A673 (cell line): ENCODE measurements at regions of chr15 and their contacts with region 1.

Region 1: GRCh38 chr15:91043202-91043874 is 20.9 kb upstream of the VPS33B start:
- DNase-seq: no peak
- H3K4me3 ChIP-seq: no peak overlapping the region
- H3K27ac ChIP-seq: no peak overlapping the region
- H3K4me1 ChIP-seq: no peaks in the 10 kb centered on the region
- H3K27me3 ChIP-seq: no peaks in the 10 kb centered on the region
- CTCF ChIP-seq: no peak

Region 2: DNA sequence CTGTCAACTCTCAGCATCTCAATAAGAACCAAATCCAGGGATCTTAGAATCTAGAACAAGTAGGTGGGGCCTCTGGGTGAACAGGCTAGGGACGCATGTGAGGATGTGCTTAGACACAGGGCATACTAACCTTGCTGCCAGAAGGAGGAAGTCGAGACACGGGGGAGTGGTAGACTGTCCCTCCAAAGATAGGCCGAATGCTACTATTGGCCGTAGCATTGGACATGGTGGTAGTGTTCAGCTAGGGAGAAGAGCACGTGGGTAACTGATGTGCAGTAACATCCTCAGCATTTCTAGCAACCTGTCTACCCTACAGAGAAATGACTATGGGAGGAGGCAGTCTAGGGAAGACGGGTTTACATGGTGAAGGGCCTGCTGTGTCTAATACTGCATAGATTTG is 73.1 kb before region 1 on chr15:
- CTCF ChIA-PET with region 1: no interaction called
- POLR2A ChIA-PET with region 1: no interaction called
- intact Hi-C with region 1: no loop called
- DNase-seq: no peak
- H3K4me3 ChIP-seq: no peak overlapping the region
- H3K27ac ChIP-seq: no peak overlapping the region
- H3K4me1 ChIP-seq: no peaks in the 10 kb centered on the region
- H3K27me3 ChIP-seq: no peaks in the 10 kb centered on the region
- CTCF ChIP-seq: no peak

Region 3: GRCh38 chr15:90994417-90995311 is 48.7 kb before region 1 on chr15 and contains the start of gene PRC1:
- CTCF ChIA-PET with region 1: no interaction called
- POLR2A ChIA-PET with region 1: interaction called, 12 read pairs
- intact Hi-C with region 1: no loop called
- DNase-seq: peak; percentile 99
- H3K4me3 ChIP-seq: peak within 1 kb of the TSS; percentile 99
- H3K27ac ChIP-seq: peak within 1 kb of the TSS; percentile 95
- H3K4me1 ChIP-seq: peaks cover 15% of the 10 kb centered on the region
- H3K27me3 ChIP-seq: no peaks in the 10 kb centered on the region
- CTCF ChIP-seq: no peak
- total RNA-seq, gene PRC1: 338 and 339 TPM in 2 replicates